GM18951 (cell line): ENCODE measurements at regions of chr4 and their contacts with region 1.

Region 1: DNA sequence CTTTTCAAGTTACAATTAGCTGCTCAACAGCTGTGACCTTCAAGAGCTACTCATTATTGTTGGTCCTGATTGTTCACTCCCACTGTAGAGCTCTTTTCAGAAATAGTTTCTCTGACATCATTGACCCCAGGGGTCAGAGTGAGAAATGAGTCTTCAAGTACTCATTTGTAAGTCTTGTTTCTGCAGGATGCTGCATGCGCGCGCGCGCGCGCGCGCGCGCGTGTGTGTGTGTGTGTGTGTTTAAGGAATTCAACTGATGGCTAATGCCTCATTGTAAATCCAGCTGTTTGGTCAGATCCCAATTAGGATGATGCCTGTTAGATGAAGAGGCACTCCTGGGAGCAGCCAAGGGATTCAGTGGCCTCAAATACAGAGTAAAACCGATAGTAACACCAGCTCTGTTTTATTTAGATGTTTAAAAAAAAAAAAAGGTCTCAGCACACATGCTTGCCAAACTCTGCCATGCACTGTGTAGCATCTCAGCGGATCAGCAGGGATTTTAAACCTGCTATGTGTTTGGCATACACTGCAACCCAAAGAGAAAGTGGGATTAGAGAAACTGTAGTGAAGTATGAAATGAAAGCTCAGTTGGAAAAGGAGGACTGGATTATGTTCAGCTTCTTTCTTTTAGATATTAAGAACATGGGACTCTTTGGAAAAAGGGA is 332.3 kb downstream of the ADGRL3 start:
- POLR2A ChIP-seq: no peak

Region 2: GRCh38 chr4:60378010-60378409 is 1154.5 kb before region 1 on chr4:
- in situ Hi-C with region 1: loop called (anchors 10 kb)
- POLR2A ChIP-seq: no peak